ENCODE measurements at regions of chr13 and their contacts with region 1.

Region 1: GRCh38 chr13:44259045-44260027 is 114.3 kb upstream of the SERP2 start:
- DNase-seq: peak; percentile 88
- ATAC-seq: peak; percentile 94
- H3K4me3 ChIP-seq: peak overlapping the region in 4 of 5 experiments; percentile 0 to 37 (median 16)
- H3K4me3 Mint-ChIP-seq: peak overlapping the region; percentile 89
- H3K27ac ChIP-seq: peak overlapping the region; percentile 52 to 67
- H3K27ac Mint-ChIP-seq: peak overlapping the region; percentile 91
- H3K4me1 ChIP-seq: peaks cover 19 to 22% of the 10 kb centered on the region in 2 donors
- H3K4me1 Mint-ChIP-seq: peaks cover 24% of the 10 kb centered on the region
- H3K27me3 ChIP-seq: no peaks in the 10 kb centered on the region
- H3K27me3 Mint-ChIP-seq: peaks cover under 1% of the 10 kb centered on the region
- CTCF ChIP-seq: no peak

Region 2: GRCh38 chr13:42996584-42996983 is 1262.8 kb before region 1 on chr13:
- CTCF ChIA-PET with region 1: no interaction called
- POLR2A ChIA-PET with region 1: no interaction called
- intact Hi-C with region 1: no loop called
- DNase-seq: no peak
- ATAC-seq: no peak
- H3K4me3 ChIP-seq: no peak overlapping the region
- H3K4me3 Mint-ChIP-seq: no peak overlapping the region
- H3K27ac ChIP-seq: no peak overlapping the region
- H3K27ac Mint-ChIP-seq: no peak overlapping the region
- H3K4me1 ChIP-seq: peaks cover 6 to 10% of the 10 kb centered on the region in 2 donors
- H3K4me1 Mint-ChIP-seq: peaks cover 14% of the 10 kb centered on the region
- H3K27me3 ChIP-seq: no peaks in the 10 kb centered on the region
- H3K27me3 Mint-ChIP-seq: no peaks in the 10 kb centered on the region
- CTCF ChIP-seq: no peak

Region 3: DNA sequence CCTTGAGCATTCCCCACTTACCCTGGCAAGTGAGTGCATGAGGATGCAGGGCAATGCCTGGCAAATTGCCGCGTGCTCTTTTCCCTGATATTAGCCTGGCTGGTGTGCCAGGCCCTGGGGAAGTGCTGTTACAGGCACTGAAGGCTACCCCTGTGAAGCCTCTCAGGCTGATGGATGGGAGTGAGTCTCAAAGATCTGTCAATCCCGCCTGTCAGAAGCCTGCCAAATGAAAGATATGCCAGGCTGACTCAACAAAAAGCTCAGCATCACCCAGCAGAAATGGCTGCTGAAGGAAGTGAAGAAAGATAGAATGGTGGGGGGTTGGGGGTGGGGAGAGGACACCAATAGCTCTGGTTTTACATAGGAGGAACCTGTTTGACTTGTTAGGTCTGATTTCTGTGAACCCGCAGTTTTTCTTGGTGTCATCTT is 267.5 kb before region 1 on chr13:
- CTCF ChIA-PET with region 1: no interaction called
- POLR2A ChIA-PET with region 1: no interaction called
- intact Hi-C with region 1: no loop called
- DNase-seq: no peak
- ATAC-seq: no peak
- H3K4me3 ChIP-seq: no peak overlapping the region
- H3K4me3 Mint-ChIP-seq: no peak overlapping the region
- H3K27ac ChIP-seq: no peak overlapping the region
- H3K27ac Mint-ChIP-seq: no peak overlapping the region
- H3K4me1 ChIP-seq: no peaks in the 10 kb centered on the region
- H3K4me1 Mint-ChIP-seq: no peaks in the 10 kb centered on the region
- H3K27me3 ChIP-seq: peaks cover 0 to 6% (median 0%) of the 10 kb centered on the region in 4 experiments
- H3K27me3 Mint-ChIP-seq: peaks cover 17% of the 10 kb centered on the region
- CTCF ChIP-seq: no peak

Region 4: GRCh38 chr13:44141725-44142539 is 117.4 kb before region 1 on chr13:
- CTCF ChIA-PET with region 1: no interaction called
- POLR2A ChIA-PET with region 1: no interaction called
- intact Hi-C with region 1: loop called (anchors 1 kb)
- DNase-seq: peak; percentile 97
- ATAC-seq: peak; percentile 99
- H3K4me3 ChIP-seq: peak overlapping the region; percentile 69 to 91 (median 81)
- H3K4me3 Mint-ChIP-seq: peak overlapping the region; percentile 96
- H3K27ac ChIP-seq: peak overlapping the region; percentile 77 to 93
- H3K27ac Mint-ChIP-seq: peak overlapping the region; percentile 94
- H3K4me1 ChIP-seq: peaks cover 22 to 26% of the 10 kb centered on the region in 2 donors
- H3K4me1 Mint-ChIP-seq: peaks cover 28% of the 10 kb centered on the region
- H3K27me3 ChIP-seq: no peaks in the 10 kb centered on the region
- H3K27me3 Mint-ChIP-seq: peaks cover 7% of the 10 kb centered on the region
- CTCF ChIP-seq: no peak

Region 5: DNA sequence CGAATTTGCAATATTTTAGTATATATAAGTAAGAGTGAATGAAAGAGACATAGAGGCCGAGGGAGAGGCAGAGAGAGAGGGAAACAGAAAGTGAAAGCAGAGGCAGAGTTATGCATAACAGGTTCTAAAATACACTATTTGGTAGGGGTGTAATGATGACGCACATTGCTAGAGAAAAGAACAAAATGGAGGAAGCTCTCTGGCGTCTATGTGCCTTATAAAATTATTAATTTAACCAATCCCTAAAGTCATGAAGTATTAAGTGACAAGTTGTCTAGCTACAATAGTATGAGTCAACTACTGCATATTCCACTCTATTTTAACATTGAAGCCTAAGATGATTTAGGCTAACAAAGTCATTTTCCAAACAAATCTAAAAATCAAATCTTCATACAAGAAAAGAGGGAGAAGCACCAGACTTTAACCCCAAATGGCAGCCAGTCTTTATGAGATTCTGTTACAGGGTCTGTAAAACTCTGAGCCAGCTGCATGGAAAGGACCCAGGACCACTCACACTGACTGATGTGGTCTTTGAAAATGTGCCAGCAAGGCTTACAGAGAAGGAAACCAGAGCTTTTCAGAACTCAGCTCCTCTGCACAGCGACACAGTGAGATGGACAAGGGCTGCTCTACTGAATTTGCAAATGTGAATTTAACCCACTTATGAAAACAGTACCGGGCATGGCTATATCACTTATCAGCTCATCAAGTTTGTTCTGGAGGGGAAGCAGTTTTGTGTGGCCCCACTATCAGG is 15.3 kb after region 1 on chr13:
- CTCF ChIA-PET with region 1: interaction called, 5 read pairs
- POLR2A ChIA-PET with region 1: interaction called, 9 read pairs
- intact Hi-C with region 1: loop called (anchors 1 kb)
- DNase-seq: peak; percentile 82
- ATAC-seq: peak; percentile 84
- H3K4me3 ChIP-seq: peak overlapping the region in 3 of 5 experiments; percentile 31 to 38 (median 35)
- H3K4me3 Mint-ChIP-seq: peak overlapping the region; percentile 65
- H3K27ac ChIP-seq: peak overlapping the region; percentile 74 to 83
- H3K27ac Mint-ChIP-seq: peak overlapping the region; percentile 85
- H3K4me1 ChIP-seq: peaks cover 29 to 44% of the 10 kb centered on the region in 2 donors
- H3K4me1 Mint-ChIP-seq: peaks cover 40% of the 10 kb centered on the region
- H3K27me3 ChIP-seq: no peaks in the 10 kb centered on the region
- H3K27me3 Mint-ChIP-seq: no peaks in the 10 kb centered on the region
- CTCF ChIP-seq: no peak

Region 6: DNA sequence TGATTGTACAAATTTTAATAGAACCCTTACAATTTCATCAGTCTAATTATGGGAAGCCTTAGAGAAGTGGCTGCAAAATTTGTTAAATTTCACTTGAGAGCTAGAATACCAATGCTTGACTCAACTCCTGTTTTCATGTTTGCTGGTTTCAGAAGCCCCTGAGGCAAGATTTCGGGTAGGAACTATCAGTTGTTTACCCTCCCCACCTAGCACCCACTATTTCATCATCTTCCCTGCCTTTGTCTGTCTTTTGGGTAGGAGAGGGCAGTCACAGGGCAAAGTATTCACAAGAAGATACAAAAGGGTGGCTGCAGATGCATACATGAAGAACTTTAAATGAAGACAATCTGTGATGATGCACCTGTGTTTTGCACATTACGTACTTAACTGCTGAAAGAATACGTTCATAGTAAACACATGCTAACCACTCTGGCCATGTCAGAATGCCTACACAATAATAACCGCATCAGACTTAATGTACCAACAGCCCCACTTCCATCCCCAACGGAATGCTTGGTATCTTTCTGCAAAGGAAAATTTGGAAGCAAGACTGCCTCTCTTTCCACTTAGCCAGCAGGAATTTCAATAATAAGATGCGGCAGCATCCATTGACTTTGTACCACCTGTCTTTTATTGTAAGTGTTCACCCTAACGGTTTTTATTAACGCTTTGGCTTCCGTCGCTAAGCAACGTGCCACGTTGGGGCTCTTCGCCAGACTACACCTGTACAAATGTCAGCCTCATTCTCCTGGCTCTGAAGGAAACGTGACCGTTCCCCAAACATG is 1051.2 kb after region 1 on chr13:
- CTCF ChIA-PET with region 1: no interaction called
- POLR2A ChIA-PET with region 1: no interaction called
- intact Hi-C with region 1: loop called (anchors 10 kb)
- DNase-seq: no peak
- ATAC-seq: no peak
- H3K4me3 ChIP-seq: peak overlapping the region in 3 of 5 experiments; percentile 53 to 69 (median 57)
- H3K4me3 Mint-ChIP-seq: peak overlapping the region; percentile 84
- H3K27ac ChIP-seq: no peak overlapping the region
- H3K27ac Mint-ChIP-seq: no peak overlapping the region
- H3K4me1 ChIP-seq: peaks cover 11 to 16% of the 10 kb centered on the region in 2 donors
- H3K4me1 Mint-ChIP-seq: peaks cover 17% of the 10 kb centered on the region
- H3K27me3 ChIP-seq: peaks cover 0 to 21% (median 13%) of the 10 kb centered on the region in 4 experiments
- H3K27me3 Mint-ChIP-seq: peaks cover 34% of the 10 kb centered on the region
- CTCF ChIP-seq: no peak